A673 (cell line): ENCODE measurements at regions of chr6 and their contacts with region 1.

Region 1: DNA sequence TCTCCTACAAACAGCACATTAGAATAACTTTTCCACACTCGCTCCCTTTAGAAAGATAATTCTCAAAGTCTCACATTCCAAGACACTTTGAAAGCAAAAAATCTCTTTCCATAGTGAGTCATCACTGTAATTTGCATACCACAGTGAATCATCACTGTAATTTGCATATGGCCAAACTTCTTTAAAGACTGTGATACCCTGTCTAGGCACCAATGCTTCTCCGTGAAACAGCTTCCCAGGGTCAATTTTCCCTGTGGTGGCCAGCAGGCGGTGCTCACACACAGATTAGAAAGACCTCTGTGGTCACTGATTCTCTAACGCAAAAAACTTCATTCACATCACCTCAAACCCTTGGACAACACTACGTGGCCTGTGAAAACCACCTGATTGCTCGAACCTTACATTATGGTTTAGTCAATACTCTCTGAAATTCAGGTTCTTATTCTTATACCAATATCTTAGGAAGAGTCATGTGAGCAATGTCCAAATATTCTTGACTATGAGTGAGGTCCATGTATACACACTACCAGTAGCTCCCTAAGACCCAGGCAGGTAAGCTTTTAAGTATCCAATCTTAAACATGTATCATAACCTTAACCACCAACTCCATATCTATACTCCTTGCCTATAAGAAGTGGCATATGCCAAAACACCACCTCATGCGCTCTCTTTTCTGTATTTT is 78.5 kb upstream of the PHACTR1 start:
- DNase-seq: peak; percentile 87
- H3K4me3 ChIP-seq: no peak overlapping the region
- H3K27ac ChIP-seq: no peak overlapping the region
- H3K4me1 ChIP-seq: no peaks in the 10 kb centered on the region
- H3K27me3 ChIP-seq: no peaks in the 10 kb centered on the region
- CTCF ChIP-seq: peak; percentile 85

Region 2: GRCh38 chr6:12844290-12845223 is 206.5 kb after region 1 on chr6:
- CTCF ChIA-PET with region 1: no interaction called
- POLR2A ChIA-PET with region 1: no interaction called
- intact Hi-C with region 1: loop called (anchors 1 kb)
- DNase-seq: peak; percentile 53
- H3K4me3 ChIP-seq: no peak overlapping the region
- H3K27ac ChIP-seq: no peak overlapping the region
- H3K4me1 ChIP-seq: no peaks in the 10 kb centered on the region
- H3K27me3 ChIP-seq: no peaks in the 10 kb centered on the region
- CTCF ChIP-seq: peak; percentile 81

Region 3: GRCh38 chr6:12890171-12890790 is 252.2 kb after region 1 on chr6:
- CTCF ChIA-PET with region 1: interaction called, 14 read pairs
- POLR2A ChIA-PET with region 1: no interaction called
- intact Hi-C with region 1: loop called (anchors 1 kb)
- DNase-seq: peak; percentile 40
- H3K4me3 ChIP-seq: no peak overlapping the region
- H3K27ac ChIP-seq: no peak overlapping the region
- H3K4me1 ChIP-seq: peaks cover 12% of the 10 kb centered on the region
- H3K27me3 ChIP-seq: no peaks in the 10 kb centered on the region
- CTCF ChIP-seq: peak; percentile 65